ENCODE measurements at regions of chr11 and their contacts with region 1.

Region 1: GRCh38 chr11:101397979-101398378 is 185.8 kb downstream of the TRPC6 start:
- DNase-seq: peak in 1 of 5 donors; percentile 11
- ATAC-seq: peak; percentile 27 to 82 (median 69)
- H3K4me3 ChIP-seq: no peak overlapping the region
- H3K27ac ChIP-seq: peak overlapping the region in 5 of 12 donors; percentile 2 to 57 (median 46)
- H3K4me1 ChIP-seq: peaks cover 0 to 9% (median 0%) of the 10 kb centered on the region in 12 donors
- H3K27me3 ChIP-seq: no peaks in the 10 kb centered on the region
- CTCF ChIP-seq: no peak
- POLR2A ChIP-seq: no peak

Region 2: DNA sequence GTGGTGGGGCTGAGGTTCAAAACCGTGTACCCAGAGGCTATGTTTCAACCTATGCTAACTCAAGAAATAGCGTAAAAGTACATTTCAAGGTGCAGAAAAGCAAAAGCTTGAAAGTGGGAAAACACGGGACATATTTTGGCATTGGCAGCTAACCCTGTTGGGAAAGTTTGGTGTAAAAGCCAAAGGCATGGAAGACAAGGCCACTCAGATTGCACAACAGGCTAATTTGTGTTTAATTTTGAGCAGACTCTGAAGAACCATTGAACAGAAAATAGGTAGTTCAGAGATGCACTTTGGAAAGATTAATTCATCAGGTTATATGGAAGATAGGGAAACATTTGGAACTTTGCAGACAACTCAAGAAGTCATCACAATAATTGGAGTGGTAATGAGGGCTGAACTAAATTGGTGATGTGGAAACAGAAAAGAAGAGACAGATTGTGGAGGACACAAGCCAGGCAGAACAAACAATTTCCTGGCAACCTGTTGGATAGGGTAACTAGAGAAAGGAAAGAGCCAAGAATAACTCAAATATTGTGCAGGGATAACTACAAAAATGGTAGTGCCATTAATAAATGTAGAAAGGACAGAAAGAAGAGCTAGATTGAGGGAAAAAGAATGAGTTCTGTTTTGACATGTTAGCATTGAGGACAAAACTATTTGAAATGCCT is 127.9 kb before region 1 on chr11:
- intact Hi-C with region 1: no loop called
- DNase-seq: no peak
- ATAC-seq: no peak
- H3K4me3 ChIP-seq: no peak overlapping the region
- H3K27ac ChIP-seq: no peak overlapping the region
- H3K4me1 ChIP-seq: no peaks in the 10 kb centered on the region
- H3K27me3 ChIP-seq: no peaks in the 10 kb centered on the region
- CTCF ChIP-seq: no peak
- POLR2A ChIP-seq: no peak

Region 3: DNA sequence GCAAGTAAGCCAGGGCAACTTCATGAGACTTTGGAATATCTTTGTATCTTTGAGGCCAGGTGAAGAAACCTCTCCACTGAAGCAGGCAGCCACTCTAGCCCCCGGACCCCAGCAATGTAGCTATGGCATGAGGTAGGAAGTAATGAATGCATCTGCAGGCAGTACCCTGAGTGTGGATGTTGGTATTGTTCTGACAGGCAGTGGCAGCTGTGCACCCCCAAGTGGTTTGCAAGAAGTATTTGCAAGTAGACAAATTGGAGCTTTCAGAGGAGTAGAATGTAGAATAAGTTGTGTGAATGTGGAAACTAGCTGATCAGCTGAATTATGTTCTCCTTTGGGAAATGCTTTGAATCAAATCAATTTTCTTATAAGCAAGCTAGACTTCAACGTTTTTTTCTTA is 74.0 kb before region 1 on chr11:
- intact Hi-C with region 1: no loop called
- DNase-seq: peak in 3 of 5 donors; percentile 19 to 27 (median 26)
- ATAC-seq: peak in 1 of 4 donors; percentile 36
- H3K4me3 ChIP-seq: no peak overlapping the region
- H3K27ac ChIP-seq: no peak overlapping the region
- H3K4me1 ChIP-seq: no peaks in the 10 kb centered on the region
- H3K27me3 ChIP-seq: no peaks in the 10 kb centered on the region
- CTCF ChIP-seq: peak in 10 of 12 donors; percentile 1 to 50 (median 30)
- POLR2A ChIP-seq: no peak

Region 4: DNA sequence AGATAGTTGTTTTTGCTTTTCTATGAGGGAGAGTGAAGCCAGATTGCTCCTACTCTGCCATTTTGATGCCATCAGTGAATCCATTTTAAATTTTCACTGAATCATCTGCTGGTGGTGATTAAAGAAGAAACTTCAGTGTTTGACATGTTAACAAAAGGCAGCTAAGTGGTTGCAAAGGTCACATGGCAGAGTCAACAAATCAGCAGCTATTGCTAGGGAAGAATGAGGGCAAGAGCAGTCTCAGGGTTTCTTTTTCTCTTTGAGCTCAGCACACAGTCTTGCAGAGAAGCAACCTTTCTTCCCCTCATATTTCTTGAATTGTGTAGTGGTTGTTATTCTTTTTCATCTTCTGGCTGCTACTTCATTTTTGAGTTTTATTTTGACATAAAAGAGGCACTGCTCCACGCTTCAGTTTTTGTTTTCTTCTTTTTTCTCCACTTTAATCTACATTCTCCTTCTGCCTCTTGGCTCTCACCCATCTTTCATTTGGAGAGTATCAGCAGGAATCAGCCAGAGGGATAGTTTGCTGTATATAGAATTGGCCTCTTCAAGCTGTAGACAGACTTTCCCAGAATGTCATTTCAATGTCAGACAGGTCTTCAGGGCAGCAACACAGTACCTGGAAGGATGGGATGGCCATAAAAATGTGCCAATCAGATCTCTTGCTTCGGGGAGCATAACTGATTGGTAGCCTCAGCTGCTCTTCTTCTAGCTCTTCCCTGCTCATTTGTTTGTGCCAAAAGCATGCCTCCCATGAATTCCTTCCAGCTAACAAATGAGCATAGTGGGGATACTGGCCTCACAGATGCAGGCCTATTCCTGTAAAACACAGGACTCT is 31.9 kb after region 1 on chr11:
- intact Hi-C with region 1: loop called in 2 of 10 experiments (anchors 5 kb)
- DNase-seq: no peak
- ATAC-seq: peak in 1 of 4 donors; percentile 44
- H3K4me3 ChIP-seq: no peak overlapping the region
- H3K27ac ChIP-seq: peak overlapping the region in 4 of 12 donors; percentile 3 to 33 (median 6)
- H3K4me1 ChIP-seq: peaks cover 0 to 10% (median 0%) of the 10 kb centered on the region in 12 donors
- H3K27me3 ChIP-seq: no peaks in the 10 kb centered on the region
- CTCF ChIP-seq: no peak
- POLR2A ChIP-seq: no peak

Region 5: GRCh38 chr11:102599642-102600261 is 1201.8 kb after region 1 on chr11:
- intact Hi-C with region 1: no loop called
- DNase-seq: no peak
- ATAC-seq: peak in 2 of 4 donors; percentile 57 to 77
- H3K4me3 ChIP-seq: no peak overlapping the region
- H3K27ac ChIP-seq: peak overlapping the region in 1 of 12 donors; percentile 49
- H3K4me1 ChIP-seq: peaks cover 0 to 14% (median 0%) of the 10 kb centered on the region in 12 donors
- H3K27me3 ChIP-seq: no peaks in the 10 kb centered on the region
- CTCF ChIP-seq: no peak
- POLR2A ChIP-seq: no peak